Transverse colon (tissue), 4 donors: ENCODE measurements at regions of chr6 and their contacts with region 1.

Region 1: GRCh38 chr6:7137335-7138045 is 29.7 kb downstream of the RREB1 start:
- DNase-seq: peak; percentile 61
- H3K4me3 ChIP-seq: peak overlapping the region in 1 of 4 donors; percentile 5
- H3K27ac ChIP-seq: peak overlapping the region; percentile 93 to 98 (median 96)
- H3K4me1 ChIP-seq: peaks cover 43 to 85% (median 64%) of the 10 kb centered on the region in 4 donors
- H3K27me3 ChIP-seq: no peaks in the 10 kb centered on the region
- CTCF ChIP-seq: no peak
- EP300 ChIP-seq: no peak
- POLR2A ChIP-seq: peak; percentile 29

Region 2: GRCh38 chr6:7115543-7116231 is 21.8 kb before region 1 on chr6:
- in situ Hi-C with region 1: no loop called
- intact Hi-C with region 1: loop called (anchors 1 kb)
- DNase-seq: peak; percentile 58
- H3K4me3 ChIP-seq: peak overlapping the region in 1 of 4 donors; percentile 5
- H3K27ac ChIP-seq: peak overlapping the region; percentile 82 to 84 (median 83)
- H3K4me1 ChIP-seq: peaks cover 36 to 83% (median 66%) of the 10 kb centered on the region in 4 donors
- H3K27me3 ChIP-seq: no peaks in the 10 kb centered on the region
- CTCF ChIP-seq: no peak
- EP300 ChIP-seq: no peak
- POLR2A ChIP-seq: peak; percentile 74

Region 3: GRCh38 chr6:7300926-7301325 is 163.4 kb after region 1 on chr6:
- in situ Hi-C with region 1: no loop called
- intact Hi-C with region 1: no loop called
- DNase-seq: no peak
- H3K4me3 ChIP-seq: no peak overlapping the region
- H3K27ac ChIP-seq: no peak overlapping the region
- H3K4me1 ChIP-seq: no peaks in the 10 kb centered on the region
- H3K27me3 ChIP-seq: no peaks in the 10 kb centered on the region
- CTCF ChIP-seq: no peak
- EP300 ChIP-seq: no peak
- POLR2A ChIP-seq: no peak